CD4-positive, alpha-beta T cell (primary cell): ENCODE measurements at regions of chr5 and their contacts with region 1.

Region 1: DNA sequence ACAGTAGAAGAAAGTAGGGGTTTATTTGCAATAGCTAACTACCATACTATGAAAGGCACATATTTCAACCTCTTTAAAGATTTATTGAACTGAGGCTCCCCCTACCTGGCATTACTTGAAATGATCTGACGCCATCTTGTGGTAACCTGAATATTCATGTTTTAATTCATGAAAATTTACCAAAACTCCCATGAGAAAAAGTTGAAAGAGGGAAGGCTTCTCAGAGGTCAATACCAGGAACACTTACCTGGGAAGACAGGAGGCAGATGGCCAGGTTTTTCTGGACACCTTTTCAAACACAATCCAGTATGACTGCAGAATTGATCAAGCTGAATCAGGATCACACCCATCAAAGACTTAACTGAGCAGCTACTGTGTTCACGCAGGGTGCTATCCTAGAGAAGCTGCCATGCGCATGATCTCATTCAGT is 9.4 kb downstream of the PRELID2 start:
- DNase-seq: peak in 3 of 14 experiments; percentile 43 to 51 (median 49)
- ATAC-seq: no peak
- H3K4me3 ChIP-seq: no peak overlapping the region
- H3K4me3 Mint-ChIP-seq: no peak overlapping the region
- H3K27ac ChIP-seq: no peak overlapping the region
- H3K27ac Mint-ChIP-seq: no peak overlapping the region
- H3K4me1 ChIP-seq: no peaks in the 10 kb centered on the region
- H3K4me1 Mint-ChIP-seq: no peaks in the 10 kb centered on the region
- H3K27me3 ChIP-seq: no peaks in the 10 kb centered on the region
- H3K27me3 Mint-ChIP-seq: no peaks in the 10 kb centered on the region
- CTCF ChIP-seq: peak; percentile 73

Region 2: DNA sequence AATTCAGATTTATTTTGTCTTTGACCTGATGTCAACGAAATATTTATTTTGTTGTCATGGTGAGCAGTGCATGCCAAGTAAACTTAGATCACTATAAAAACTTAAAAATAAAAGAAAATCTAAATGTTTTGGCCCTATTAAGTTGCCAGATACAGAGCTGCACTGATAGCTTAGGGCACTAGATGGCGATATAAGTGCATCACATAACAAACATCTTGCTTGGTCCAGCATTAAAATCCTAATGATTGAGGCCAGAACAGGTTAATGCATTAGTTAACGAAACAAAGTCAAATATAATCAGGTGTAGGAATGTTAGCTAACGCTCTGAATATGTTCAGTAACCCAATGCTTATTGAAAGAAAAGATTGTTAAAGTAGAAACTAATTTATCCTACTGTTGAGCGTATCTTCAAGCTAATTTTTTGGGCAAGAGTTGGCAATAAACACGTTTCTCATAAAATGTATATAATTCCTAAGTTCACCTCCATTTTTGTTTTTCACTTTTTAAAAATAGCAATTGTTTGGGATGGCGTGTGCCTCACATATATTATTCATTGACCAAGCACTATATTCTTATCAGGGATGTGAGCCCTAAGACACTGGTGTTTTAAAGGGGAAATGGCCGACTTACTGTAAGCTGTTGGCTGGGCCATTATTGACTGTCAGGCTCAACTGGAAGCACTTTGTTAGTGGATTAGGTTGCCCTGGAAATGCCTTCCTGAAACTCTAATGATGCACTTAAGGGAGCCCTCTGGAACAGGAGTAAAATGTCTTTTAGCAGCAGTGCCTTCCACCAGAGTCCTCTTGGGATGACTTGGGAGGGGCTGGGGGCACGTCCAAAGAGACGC is 1621.8 kb before region 1 on chr5:
- CTCF ChIA-PET with region 1: interaction called, 8 read pairs
- POLR2A ChIA-PET with region 1: no interaction called
- intact Hi-C with region 1: loop called in 1 of 2 experiments (anchors 2 kb)
- DNase-seq: peak in 8 of 14 experiments; percentile 5 to 76 (median 39)
- ATAC-seq: peak; percentile 55
- H3K4me3 ChIP-seq: no peak overlapping the region
- H3K4me3 Mint-ChIP-seq: no peak overlapping the region
- H3K27ac ChIP-seq: no peak overlapping the region
- H3K27ac Mint-ChIP-seq: no peak overlapping the region
- H3K4me1 ChIP-seq: peaks cover 6% of the 10 kb centered on the region
- H3K4me1 Mint-ChIP-seq: peaks cover 4% of the 10 kb centered on the region
- H3K27me3 ChIP-seq: peaks cover 25 to 47% of the 10 kb centered on the region in 2 experiments
- H3K27me3 Mint-ChIP-seq: peaks cover 83% of the 10 kb centered on the region
- CTCF ChIP-seq: peak; percentile 94

Region 3: DNA sequence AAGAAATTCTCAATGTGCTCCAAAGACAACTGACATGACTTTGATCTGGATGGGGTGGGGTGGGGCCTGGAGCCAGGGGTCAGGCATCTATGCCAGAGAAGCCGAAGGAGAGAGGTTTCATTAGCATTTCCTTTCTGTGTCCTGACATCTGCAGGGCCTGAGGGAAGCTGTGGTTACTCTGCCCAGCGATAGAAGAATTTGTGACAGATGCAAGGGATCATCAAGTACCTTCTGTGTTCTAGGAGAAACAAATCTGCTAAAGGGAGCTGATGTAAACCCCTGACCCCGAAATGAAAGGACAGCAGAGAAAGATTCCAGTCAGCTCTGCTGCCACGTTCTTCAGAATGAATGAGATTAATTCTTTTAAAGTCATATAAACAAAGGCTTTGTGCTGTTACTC is 326.3 kb before region 1 on chr5:
- CTCF ChIA-PET with region 1: no interaction called
- POLR2A ChIA-PET with region 1: no interaction called
- intact Hi-C with region 1: no loop called
- DNase-seq: no peak
- ATAC-seq: no peak
- H3K4me3 ChIP-seq: no peak overlapping the region
- H3K4me3 Mint-ChIP-seq: no peak overlapping the region
- H3K27ac ChIP-seq: no peak overlapping the region
- H3K27ac Mint-ChIP-seq: no peak overlapping the region
- H3K4me1 ChIP-seq: no peaks in the 10 kb centered on the region
- H3K4me1 Mint-ChIP-seq: no peaks in the 10 kb centered on the region
- H3K27me3 ChIP-seq: no peaks in the 10 kb centered on the region
- H3K27me3 Mint-ChIP-seq: no peaks in the 10 kb centered on the region
- CTCF ChIP-seq: no peak

Region 4: GRCh38 chr5:145853781-145854376 is 28.1 kb after region 1 on chr5:
- CTCF ChIA-PET with region 1: no interaction called
- POLR2A ChIA-PET with region 1: no interaction called
- intact Hi-C with region 1: no loop called
- DNase-seq: no peak
- ATAC-seq: no peak
- H3K4me3 ChIP-seq: no peak overlapping the region
- H3K4me3 Mint-ChIP-seq: no peak overlapping the region
- H3K27ac ChIP-seq: no peak overlapping the region
- H3K27ac Mint-ChIP-seq: no peak overlapping the region
- H3K4me1 ChIP-seq: no peaks in the 10 kb centered on the region
- H3K4me1 Mint-ChIP-seq: no peaks in the 10 kb centered on the region
- H3K27me3 ChIP-seq: no peaks in the 10 kb centered on the region
- H3K27me3 Mint-ChIP-seq: peaks cover 9% of the 10 kb centered on the region
- CTCF ChIP-seq: no peak

Region 5: DNA sequence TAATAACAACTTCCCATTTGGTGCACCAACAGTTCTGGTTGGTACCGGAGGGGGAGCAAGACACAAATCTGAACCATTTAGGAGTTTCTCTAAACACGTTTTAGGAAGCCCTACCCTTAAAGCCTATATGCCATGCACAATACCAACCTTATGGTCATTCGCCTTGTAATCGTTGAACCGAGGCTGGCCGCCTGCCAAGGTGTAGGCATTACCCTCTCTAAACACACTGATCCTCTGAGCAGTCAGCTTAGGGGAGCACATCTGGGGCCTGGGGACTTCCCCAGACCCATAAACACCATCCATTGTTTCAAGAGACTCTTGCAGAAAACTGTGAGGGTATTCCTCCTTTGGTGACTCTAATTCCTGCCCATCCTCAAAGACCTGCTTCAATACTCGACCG is 46.7 kb after region 1 on chr5:
- CTCF ChIA-PET with region 1: no interaction called
- POLR2A ChIA-PET with region 1: no interaction called
- intact Hi-C with region 1: no loop called
- DNase-seq: no peak
- ATAC-seq: no peak
- H3K4me3 ChIP-seq: no peak overlapping the region
- H3K4me3 Mint-ChIP-seq: no peak overlapping the region
- H3K27ac ChIP-seq: no peak overlapping the region
- H3K27ac Mint-ChIP-seq: no peak overlapping the region
- H3K4me1 ChIP-seq: no peaks in the 10 kb centered on the region
- H3K4me1 Mint-ChIP-seq: no peaks in the 10 kb centered on the region
- H3K27me3 ChIP-seq: no peaks in the 10 kb centered on the region
- H3K27me3 Mint-ChIP-seq: peaks cover 35% of the 10 kb centered on the region
- CTCF ChIP-seq: no peak